Left cardiac atrium (tissue), 4 donors: ENCODE measurements at regions of chr14 and their contacts with region 1.

Region 1: DNA sequence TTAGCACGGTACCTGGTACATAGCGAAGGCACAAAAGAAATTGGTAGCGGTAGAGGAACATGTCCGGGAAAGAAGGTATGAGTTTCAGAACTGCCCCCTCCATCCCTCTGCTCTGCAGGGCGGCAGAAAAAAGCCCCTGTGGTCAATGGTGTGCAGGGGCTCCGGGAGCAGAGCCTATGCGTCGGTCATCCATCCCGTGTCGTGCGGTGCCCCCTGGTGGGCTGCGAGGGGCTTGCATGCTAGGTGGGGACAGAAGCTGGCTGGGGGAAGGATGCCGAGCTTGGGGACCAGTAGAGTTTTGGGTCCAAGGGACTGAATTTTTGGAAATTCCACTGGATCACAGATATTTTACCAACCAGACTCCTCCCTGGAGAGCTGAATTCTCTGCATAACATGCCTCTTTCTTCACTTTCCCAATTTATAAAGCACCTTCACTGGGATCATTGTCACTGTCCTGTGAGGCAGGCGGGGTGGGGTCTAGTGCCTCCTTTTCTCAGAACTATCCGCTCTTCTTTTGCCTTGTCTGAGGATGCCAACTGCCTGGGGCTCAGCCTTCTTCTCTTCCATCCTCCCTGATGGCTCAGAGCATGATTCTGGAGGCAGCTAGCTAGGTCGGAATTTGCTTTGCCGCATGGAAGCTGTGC is 148.7 kb downstream of the SMOC1 start:
- DNase-seq: peak; percentile 71
- ATAC-seq: peak; percentile 80 to 83

Region 2: GRCh38 chr14:69643443-69644164 is 384.3 kb before region 1 on chr14:
- intact Hi-C with region 1: no loop called
- DNase-seq: peak; percentile 44
- ATAC-seq: peak; percentile 49 to 72

Region 3: DNA sequence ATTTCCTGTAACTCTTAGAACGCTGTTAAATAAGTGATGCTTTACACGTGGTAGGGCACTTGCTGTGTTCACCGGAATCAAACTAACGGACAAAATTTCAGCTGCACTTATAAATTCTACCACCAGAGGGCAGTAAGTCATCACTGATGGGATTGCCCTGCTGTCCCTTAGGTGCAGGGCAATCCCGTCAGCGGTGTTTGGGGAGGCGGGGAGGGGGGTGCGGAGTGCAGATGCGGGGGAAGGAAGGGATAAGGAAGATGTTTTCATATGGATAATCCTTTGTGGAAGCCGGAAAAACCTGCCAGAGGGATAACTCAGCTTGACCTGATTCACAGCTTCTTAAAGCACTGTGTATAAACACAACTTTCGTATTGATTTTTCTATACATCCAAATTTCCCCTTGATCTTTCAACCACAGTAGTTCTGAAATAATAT is 209.1 kb before region 1 on chr14:
- intact Hi-C with region 1: loop called (anchors 1 to 2 kb)
- DNase-seq: peak; percentile 27
- ATAC-seq: peak; percentile 74 to 79

Region 4: DNA sequence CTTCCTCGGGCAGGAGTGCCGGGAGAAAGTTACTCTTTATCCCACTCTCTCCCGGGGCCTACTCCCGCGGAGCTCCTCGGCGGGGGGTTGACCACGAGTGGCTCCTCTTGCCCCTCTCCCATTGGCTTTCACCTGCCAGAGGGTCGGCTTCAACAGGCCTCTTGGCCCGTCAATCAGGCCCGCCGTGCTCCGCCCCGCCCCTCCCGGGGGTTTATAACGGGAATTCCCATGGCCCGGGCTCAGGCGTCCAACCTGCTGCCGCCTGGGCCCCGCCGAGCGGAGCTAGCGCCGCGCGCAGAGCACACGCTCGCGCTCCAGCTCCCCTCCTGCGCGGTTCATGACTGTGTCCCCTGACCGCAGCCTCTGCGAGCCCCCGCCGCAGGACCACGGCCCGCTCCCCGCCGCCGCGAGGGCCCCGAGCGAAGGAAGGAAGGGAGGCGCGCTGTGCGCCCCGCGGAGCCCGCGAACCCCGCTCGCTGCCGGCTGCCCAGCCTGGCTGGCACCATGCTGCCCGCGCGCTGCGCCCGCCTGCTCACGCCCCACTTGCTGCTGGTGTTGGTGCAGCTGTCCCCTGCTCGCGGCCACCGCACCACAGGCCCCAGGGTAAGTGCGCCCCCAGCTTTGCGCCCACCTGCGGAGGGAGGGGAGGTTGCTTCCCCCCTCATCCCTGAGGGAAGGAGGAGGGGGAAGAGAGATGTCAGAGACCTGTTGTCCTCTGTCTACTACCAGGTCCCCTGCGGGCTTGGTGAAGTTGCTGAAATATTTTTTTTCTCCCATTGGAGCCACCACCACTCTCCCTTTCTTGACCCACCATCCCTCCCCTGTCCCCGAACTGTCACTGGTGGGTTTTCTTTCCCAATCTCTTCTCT is 148.5 kb before region 1 on chr14 and contains the start of gene SMOC1:
- intact Hi-C with region 1: loop called in 1 of 2 experiments (anchors 5 kb)
- DNase-seq: peak; percentile 88
- ATAC-seq: peak; percentile 86 to 94
- total RNA-seq, gene SMOC1: 5.4 to 14.9 TPM

Region 5: DNA sequence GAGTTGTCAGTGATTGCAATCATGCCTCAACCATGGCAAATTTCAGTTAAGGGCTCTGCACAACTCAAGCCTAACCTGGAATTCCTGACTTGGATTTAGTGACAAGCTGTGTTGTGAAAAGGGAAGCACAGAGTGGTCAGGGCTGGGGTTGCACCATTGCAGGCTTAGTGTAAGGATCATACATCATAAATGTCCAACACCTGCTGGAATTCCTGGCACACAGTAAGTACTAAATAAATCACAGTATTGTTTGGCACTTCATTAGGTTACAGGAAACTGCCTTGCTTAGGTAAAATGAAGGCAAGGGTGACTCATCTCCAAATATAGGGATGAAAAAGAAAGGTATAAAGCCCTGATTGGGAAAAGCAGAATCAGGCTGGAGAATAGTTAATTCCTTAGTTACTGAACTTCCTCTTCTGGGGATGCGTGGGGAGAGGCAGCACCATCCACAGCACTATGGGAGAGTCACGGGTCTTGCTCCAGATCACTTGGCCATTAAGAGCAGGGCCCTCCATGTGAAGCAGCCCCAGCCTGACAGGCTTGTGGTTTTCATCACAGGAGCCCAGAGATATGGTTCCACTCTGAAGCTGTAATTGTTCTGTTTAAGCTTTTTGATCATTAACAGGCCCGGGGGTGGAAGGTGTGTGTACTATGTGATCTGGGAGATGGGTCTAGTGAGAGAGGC is 121.1 kb after region 1 on chr14:
- intact Hi-C with region 1: no loop called
- DNase-seq: no peak
- ATAC-seq: no peak